Heart left ventricle (tissue), 16 donors: ENCODE measurements at regions of chr22 and their contacts with region 1.

Region 1: DNA sequence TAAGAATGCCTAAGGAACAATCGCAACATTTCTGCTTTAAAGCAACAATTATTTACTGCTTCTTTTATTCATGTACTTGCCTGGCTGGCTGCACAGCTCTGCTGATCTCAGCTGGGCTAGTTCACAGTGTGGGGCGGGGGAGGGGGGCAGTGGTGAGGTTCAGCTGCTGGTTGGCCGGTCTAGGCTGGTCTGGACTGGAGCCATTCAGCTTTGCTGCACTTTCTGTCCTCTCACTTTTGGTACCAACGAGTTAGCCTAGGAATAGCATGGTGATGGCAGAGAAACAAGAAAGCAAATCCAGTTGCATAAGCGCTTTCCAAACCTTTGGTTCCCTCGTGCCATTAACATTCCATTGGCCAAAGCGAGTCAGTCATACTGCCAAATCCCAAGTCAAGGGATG is 16.0 kb upstream of the MIF start:
- DNase-seq: peak in 3 of 5 donors; percentile 53 to 61 (median 55)
- ATAC-seq: peak; percentile 86 to 91 (median 88)
- H3K4me3 ChIP-seq: no peak overlapping the region
- H3K27ac ChIP-seq: peak overlapping the region in 7 of 12 donors; percentile 5 to 46 (median 34)
- H3K4me1 ChIP-seq: peaks cover 0 to 13% (median 0%) of the 10 kb centered on the region in 12 donors
- H3K27me3 ChIP-seq: no peaks in the 10 kb centered on the region
- CTCF ChIP-seq: no peak
- POLR2A ChIP-seq: no peak

Region 2: GRCh38 chr22:23786752-23787599 is 91.2 kb before region 1 on chr22 and contains the start of gene SMARCB1:
- intact Hi-C with region 1: no loop called
- DNase-seq: peak; percentile 92 to 96 (median 94)
- ATAC-seq: peak; percentile 82 to 94 (median 92)
- H3K4me3 ChIP-seq: peak within 1 kb of the TSS; percentile 63 to 100 (median 96)
- H3K27ac ChIP-seq: peak within 1 kb of the TSS; percentile 91 to 100 (median 100)
- H3K4me1 ChIP-seq: peaks cover 8 to 56% (median 47%) of the 10 kb centered on the region in 12 donors
- H3K27me3 ChIP-seq: no peaks in the 10 kb centered on the region
- CTCF ChIP-seq: no peak
- POLR2A ChIP-seq: peak in 1 of 2 donors; percentile 84
- total RNA-seq, gene SMARCB1: 32.8 to 54.2 (median 45.6) TPM

Region 3: DNA sequence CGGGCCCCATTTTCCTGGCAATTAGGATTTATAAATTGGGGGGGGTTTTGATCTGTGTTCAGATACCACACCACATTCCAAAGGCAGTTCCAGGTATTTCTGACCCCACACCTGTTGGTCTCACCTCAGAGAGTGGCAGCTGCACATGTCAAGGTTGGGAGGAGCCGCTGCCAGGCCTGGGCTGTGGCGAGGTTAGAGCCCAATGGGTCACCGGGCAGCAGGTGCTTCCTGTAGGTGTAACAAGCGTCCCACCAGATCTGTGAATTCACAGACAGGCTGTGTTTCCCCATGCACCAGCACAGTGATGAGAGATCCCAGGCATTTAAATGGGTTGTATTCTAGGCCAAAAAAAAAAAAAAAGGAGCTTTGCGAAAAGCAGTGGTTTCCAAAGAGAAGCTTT is 191.5 kb after region 1 on chr22:
- intact Hi-C with region 1: loop called in 1 of 10 experiments (anchors 5 kb)
- DNase-seq: no peak
- ATAC-seq: no peak
- H3K4me3 ChIP-seq: no peak overlapping the region
- H3K27ac ChIP-seq: no peak overlapping the region
- H3K4me1 ChIP-seq: peaks cover 0 to 27% (median 6%) of the 10 kb centered on the region in 12 donors
- H3K27me3 ChIP-seq: no peaks in the 10 kb centered on the region
- CTCF ChIP-seq: no peak
- POLR2A ChIP-seq: no peak